ENCODE measurements at regions of chr7 and their contacts with region 1.

Region 1: GRCh38 chr7:31633894-31634494 is 53.0 kb upstream of the PPP1R17 start:
- DNase-seq: peak; percentile 54 to 55
- H3K4me3 ChIP-seq: no peak overlapping the region
- H3K27ac ChIP-seq: no peak overlapping the region
- H3K4me1 ChIP-seq: no peaks in the 10 kb centered on the region
- H3K27me3 ChIP-seq: no peaks in the 10 kb centered on the region
- CTCF ChIP-seq: peak in 2 of 3 donors; percentile 33 to 69
- POLR2A ChIP-seq: no peak

Region 2: GRCh38 chr7:31261341-31261740 is 372.7 kb before region 1 on chr7:
- intact Hi-C with region 1: loop called (anchors 5 kb)
- DNase-seq: no peak
- H3K4me3 ChIP-seq: no peak overlapping the region
- H3K27ac ChIP-seq: no peak overlapping the region
- H3K4me1 ChIP-seq: no peaks in the 10 kb centered on the region
- H3K27me3 ChIP-seq: no peaks in the 10 kb centered on the region
- CTCF ChIP-seq: no peak
- POLR2A ChIP-seq: no peak

Region 3: DNA sequence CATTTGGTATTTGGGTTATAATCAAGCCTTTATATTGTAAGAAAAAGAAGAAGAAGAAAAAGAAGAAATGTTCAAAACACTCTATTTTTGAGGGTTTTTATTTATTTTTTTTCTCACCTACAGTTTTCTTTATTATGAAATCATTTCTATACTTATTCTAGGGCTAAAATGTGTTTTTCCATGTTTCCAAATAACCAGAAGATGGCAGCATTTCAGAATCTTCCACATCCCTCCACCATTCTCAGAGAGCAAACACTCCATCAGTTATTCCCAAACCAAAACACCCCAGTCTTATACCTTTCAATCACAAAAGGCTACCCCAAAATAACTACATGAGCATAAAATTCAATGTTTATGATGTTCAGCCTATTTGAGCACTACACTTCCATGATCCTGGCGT is 14.3 kb after region 1 on chr7:
- intact Hi-C with region 1: no loop called
- DNase-seq: no peak
- H3K4me3 ChIP-seq: no peak overlapping the region
- H3K27ac ChIP-seq: no peak overlapping the region
- H3K4me1 ChIP-seq: no peaks in the 10 kb centered on the region
- H3K27me3 ChIP-seq: no peaks in the 10 kb centered on the region
- CTCF ChIP-seq: no peak
- POLR2A ChIP-seq: no peak